PC-9 (cell line): ENCODE measurements at regions of chr7 and their contacts with region 1.

Region 1: DNA sequence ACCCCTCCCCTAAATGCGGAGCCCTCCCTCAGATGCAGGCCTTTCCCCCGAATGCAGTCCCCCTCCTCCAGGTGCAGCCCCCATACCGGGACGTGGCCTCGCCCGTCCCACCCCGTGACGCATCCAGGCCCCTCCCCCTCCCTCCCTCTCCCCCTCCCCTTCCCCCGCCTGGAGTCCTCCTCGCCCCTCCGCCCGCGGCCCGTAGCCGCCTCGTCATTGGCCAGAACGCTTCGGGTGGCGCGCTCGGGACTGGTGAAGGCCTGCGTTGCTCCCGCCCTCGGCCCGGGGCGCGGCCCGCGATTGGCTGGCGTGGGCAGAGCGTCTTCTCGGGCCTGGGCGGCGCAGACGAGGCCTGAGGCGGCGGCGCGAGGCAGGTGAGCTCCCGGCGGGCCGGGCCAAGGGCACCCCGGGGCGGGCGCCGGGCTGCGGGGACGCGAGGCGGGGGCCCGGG is 16.0 kb upstream of the SUN1 start:
- DNase-seq: peak; percentile 94 to 100
- H3K4me3 ChIP-seq: peak overlapping the region; percentile 64
- H3K27ac ChIP-seq: no peak overlapping the region
- H3K4me1 ChIP-seq: peaks cover 38% of the 10 kb centered on the region
- H3K27me3 ChIP-seq: no peaks in the 10 kb centered on the region
- CTCF ChIP-seq: no peak

Region 2: GRCh38 chr7:148932-149855 is 667.1 kb before region 1 on chr7:
- CTCF ChIA-PET with region 1: no interaction called
- POLR2A ChIA-PET with region 1: no interaction called
- intact Hi-C with region 1: no loop called
- DNase-seq: peak; percentile 97 to 99
- H3K4me3 ChIP-seq: peak overlapping the region; percentile 57
- H3K27ac ChIP-seq: peak overlapping the region; percentile 92
- H3K4me1 ChIP-seq: peaks cover 23% of the 10 kb centered on the region
- H3K27me3 ChIP-seq: no peaks in the 10 kb centered on the region
- CTCF ChIP-seq: no peak

Region 3: DNA sequence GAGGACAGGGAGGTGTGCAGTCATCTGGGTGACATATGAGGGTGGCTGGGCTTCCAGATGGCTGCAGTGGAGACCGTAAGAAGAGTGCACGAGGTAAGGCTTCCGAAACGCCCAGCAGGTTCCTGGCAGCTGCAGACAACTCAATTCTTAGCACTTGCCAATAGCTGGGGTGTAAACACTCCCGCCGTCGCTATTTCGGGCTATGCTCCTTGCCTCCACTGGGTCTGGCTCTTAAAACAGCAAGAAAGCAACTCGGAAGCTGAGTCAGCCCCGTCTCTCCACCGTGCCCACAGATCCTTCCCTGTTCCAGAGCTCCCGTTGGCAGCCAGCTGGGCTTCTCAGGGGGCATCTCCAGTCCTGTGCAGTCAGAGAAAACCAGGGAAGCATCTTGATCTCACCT is 290.6 kb before region 1 on chr7:
- CTCF ChIA-PET with region 1: no interaction called
- POLR2A ChIA-PET with region 1: no interaction called
- intact Hi-C with region 1: loop called (anchors 5 kb)
- DNase-seq: peak in 1 of 2 experiments; percentile 33
- H3K4me3 ChIP-seq: no peak overlapping the region
- H3K27ac ChIP-seq: no peak overlapping the region
- H3K4me1 ChIP-seq: peaks cover 46% of the 10 kb centered on the region
- H3K27me3 ChIP-seq: no peaks in the 10 kb centered on the region
- CTCF ChIP-seq: no peak

Region 4: DNA sequence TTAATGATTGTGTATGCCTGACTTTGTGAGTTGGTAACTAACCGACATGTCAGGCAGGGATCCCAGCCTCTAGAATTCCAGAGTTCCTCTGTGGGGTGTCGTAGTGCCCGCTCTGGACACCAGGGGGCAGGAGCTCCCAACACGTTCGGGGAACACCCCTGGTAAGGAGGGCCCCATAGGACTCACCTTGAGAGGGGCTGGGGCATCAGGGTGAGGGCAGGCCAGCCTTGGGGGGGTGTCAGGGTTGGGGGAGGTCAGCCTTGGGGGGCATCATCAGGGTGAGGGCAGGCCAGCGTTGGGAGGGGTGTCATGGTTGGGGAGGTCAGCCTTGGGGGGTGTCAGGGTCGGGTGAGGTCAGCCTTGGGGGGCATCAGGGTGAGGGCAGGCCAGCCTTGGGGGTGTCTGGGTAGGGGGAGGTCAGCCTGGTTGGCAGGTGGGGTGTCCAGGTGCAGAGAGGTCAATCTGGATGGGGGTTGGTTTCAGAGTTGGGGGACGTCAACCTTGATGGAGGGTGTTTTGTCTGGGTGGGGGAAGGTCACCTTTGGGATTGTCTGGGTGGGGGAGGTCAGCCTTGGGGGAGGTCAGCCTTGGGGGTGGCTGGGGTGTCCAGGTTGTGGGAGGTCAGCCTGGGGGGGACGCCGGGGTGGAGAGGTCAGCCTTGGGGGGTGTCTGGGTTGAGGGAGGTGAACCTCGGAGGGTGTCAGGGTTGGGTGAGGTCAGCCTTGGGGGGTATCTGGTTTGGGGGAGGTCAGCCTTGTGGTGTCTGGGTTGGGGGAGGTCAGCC is 29.7 kb before region 1 on chr7:
- CTCF ChIA-PET with region 1: interaction called, 5 read pairs
- POLR2A ChIA-PET with region 1: interaction called, 4 read pairs
- intact Hi-C with region 1: loop called (anchors 2 kb)
- DNase-seq: peak; percentile 54 to 81
- H3K4me3 ChIP-seq: no peak overlapping the region
- H3K27ac ChIP-seq: no peak overlapping the region
- H3K4me1 ChIP-seq: no peaks in the 10 kb centered on the region
- H3K27me3 ChIP-seq: no peaks in the 10 kb centered on the region
- CTCF ChIP-seq: peak; percentile 98

Region 5: GRCh38 chr7:831596-832166 is 15.4 kb after region 1 on chr7:
- CTCF ChIA-PET with region 1: interaction called, 7 read pairs
- POLR2A ChIA-PET with region 1: interaction called, 50 read pairs
- intact Hi-C with region 1: loop called (anchors 1 kb)
- DNase-seq: peak; percentile 58 to 93
- H3K4me3 ChIP-seq: peak overlapping the region; percentile 46; the same call in 1 of the 2 replicates
- H3K27ac ChIP-seq: peak overlapping the region; percentile 97
- H3K4me1 ChIP-seq: peaks cover 57% of the 10 kb centered on the region
- H3K27me3 ChIP-seq: no peaks in the 10 kb centered on the region
- CTCF ChIP-seq: no peak

Region 6: GRCh38 chr7:945556-946255 is 129.4 kb after region 1 on chr7:
- CTCF ChIA-PET with region 1: no interaction called
- POLR2A ChIA-PET with region 1: no interaction called
- intact Hi-C with region 1: loop called (anchors 1 kb)
- DNase-seq: peak; percentile 99 to 100
- H3K4me3 ChIP-seq: peak overlapping the region; percentile 48; the same call in 1 of the 2 replicates
- H3K27ac ChIP-seq: peak overlapping the region; percentile 94
- H3K4me1 ChIP-seq: peaks cover 61% of the 10 kb centered on the region
- H3K27me3 ChIP-seq: no peaks in the 10 kb centered on the region
- CTCF ChIP-seq: no peak

Region 7: DNA sequence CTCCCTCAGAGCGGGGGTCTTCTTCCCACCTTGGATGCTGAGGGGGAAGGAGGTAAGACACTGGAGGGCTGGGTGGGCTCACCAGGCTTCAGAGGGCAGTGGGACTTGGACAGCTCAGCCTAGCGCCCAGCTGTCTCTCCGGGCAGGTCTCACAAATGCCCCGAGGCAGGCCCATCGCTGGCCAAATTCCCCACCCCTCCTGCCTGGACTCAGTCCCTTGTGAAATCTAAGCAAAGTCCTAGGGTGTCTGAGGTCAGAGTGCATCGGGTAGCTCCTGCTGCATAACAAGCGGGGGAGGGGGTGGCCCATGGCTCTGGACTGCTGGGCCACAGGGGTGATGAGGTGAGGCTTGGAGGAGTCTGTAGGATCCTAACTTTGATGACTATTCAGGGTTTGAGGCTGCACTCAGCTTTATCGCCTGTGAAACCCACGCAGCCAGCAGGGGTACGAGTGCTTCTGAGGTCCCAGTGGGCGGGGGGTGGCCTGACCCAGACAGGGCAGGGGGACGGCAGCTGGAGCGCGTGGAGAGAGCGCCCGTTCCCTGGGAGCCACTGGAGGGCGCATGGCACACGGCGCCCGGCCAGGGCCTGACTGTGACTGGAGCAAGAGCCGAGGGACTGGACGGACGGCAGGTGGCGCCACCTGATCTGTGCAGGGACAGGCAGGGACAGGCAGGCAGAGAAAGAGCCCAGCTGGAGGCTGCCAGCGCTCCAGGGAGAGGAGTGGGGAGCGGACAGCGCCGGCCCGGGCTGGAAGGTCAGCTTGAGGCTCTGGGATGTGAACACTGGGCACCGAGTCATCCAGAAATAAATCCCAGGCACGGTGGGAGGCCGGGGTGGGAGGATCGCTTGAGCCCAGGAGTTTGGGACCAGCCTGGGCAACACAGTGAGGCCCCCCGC is 176.6 kb after region 1 on chr7:
- CTCF ChIA-PET with region 1: interaction called, 12 read pairs
- POLR2A ChIA-PET with region 1: no interaction called
- intact Hi-C with region 1: no loop called
- DNase-seq: peak; percentile 85 to 97
- H3K4me3 ChIP-seq: no peak overlapping the region
- H3K27ac ChIP-seq: no peak overlapping the region
- H3K4me1 ChIP-seq: no peaks in the 10 kb centered on the region
- H3K27me3 ChIP-seq: no peaks in the 10 kb centered on the region
- CTCF ChIP-seq: peak; percentile 99